GM12878 (cell line): ENCODE measurements at regions of chr17 and their contacts with region 1.

Region 1: GRCh38 chr17:2929881-2930533 is 133.4 kb downstream of the OR1D5 start:
- DNase-seq: no peak
- ATAC-seq: peak; percentile 76
- H3K4me3 ChIP-seq: no peak overlapping the region
- H3K27ac ChIP-seq: no peak overlapping the region
- H3K4me1 ChIP-seq: no peaks in the 10 kb centered on the region
- H3K27me3 ChIP-seq: no peaks in the 10 kb centered on the region
- CTCF ChIP-seq: peak; percentile 43 to 71 (median 49)
- EP300 ChIP-seq: no peak
- POLR2A ChIP-seq: no peak
- RAD21 ChIP-seq: peak; percentile 44

Region 2: DNA sequence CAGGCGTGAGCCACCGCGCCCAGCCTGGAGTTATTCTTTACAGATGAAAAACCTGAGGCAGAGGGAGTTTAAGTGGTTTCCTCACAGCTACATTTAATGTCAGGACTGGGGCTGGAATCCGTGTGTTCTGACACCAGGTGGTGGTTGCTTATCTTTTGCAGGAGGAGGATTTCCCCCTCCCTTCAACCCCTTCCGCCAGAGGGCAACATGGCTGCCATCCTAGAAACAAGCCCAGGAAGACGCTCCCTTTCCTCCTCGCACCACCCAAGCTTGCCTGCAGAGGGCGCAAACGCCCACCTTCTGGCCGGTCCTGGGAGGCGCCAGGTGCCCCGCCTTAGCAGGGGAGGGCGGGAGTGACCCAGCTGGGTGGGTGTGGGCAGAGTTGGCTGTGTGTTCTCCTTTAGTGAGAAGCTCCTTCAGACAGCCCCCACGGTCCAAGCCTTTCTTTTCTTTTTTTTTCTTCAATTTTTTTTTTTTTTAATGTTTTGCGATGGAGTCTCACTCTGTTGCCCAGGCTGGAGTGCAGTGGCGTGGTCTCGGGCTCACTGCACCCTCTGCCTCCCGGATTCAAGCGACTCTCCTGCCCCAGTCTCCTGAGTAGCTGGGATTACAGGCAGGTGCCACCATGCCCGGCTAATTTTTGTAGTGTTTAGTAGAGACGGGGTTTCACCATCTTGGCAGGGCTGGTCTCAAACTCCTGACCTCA is 143.7 kb before region 1 on chr17:
- CTCF ChIA-PET with region 1: interaction called, 3 read pairs
- POLR2A ChIA-PET with region 1: no interaction called
- RAD21 ChIA-PET with region 1: no interaction called
- SMC1A ChIA-PET with region 1: no interaction called
- in situ Hi-C with region 1: no loop called
- intact Hi-C with region 1: loop called (anchors 2 kb)
- DNase-seq: peak; percentile 61
- ATAC-seq: peak; percentile 99
- H3K4me3 ChIP-seq: no peak overlapping the region
- H3K27ac ChIP-seq: no peak overlapping the region
- H3K4me1 ChIP-seq: peaks cover 2% of the 10 kb centered on the region
- H3K27me3 ChIP-seq: no peaks in the 10 kb centered on the region; a peak in 1 of 4 replicates
- CTCF ChIP-seq: peak; percentile 76 to 87 (median 86)
- EP300 ChIP-seq: no peak
- POLR2A ChIP-seq: no peak
- RAD21 ChIP-seq: peak; percentile 74

Region 3: DNA sequence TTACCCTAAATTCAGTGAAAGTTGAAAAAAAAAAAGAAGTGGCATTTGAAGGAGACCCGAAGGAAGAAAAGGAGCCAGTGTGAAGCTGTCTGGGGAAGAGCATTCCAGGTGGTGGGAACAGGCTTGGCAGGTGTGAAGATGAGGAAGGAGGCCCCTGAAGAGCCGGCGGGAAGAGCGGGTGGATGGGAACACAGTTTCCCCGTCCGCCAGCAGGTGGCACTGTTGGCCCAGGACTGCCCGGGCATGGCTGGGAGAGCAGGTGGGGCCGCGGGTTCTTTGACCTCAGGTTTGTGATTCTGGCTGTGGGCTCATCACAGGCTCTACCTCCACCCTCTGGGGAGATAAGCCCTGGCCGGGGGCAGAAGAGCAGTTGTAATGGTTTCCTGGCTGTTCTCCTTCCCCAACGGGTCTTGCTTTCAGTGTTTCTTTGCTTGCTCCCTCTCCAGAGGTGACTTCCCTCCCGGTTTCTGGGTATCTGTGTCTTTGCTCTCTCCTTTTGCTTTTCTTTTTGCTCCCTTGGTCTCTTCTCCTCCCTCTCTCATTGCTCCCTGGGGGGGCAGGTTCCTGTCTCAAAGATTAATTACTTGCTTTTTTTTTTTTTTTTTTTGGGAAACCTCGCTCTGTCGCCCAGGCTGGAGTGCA is 101.5 kb before region 1 on chr17:
- CTCF ChIA-PET with region 1: interaction called, 4 read pairs
- POLR2A ChIA-PET with region 1: no interaction called
- RAD21 ChIA-PET with region 1: no interaction called
- SMC1A ChIA-PET with region 1: interaction called, 3 read pairs
- in situ Hi-C with region 1: no loop called
- intact Hi-C with region 1: loop called (anchors 1 kb)
- DNase-seq: no peak
- ATAC-seq: peak; percentile 96
- H3K4me3 ChIP-seq: no peak overlapping the region
- H3K27ac ChIP-seq: no peak overlapping the region
- H3K4me1 ChIP-seq: peaks cover 2% of the 10 kb centered on the region; the same call in 1 of the 2 replicates
- H3K27me3 ChIP-seq: no peaks in the 10 kb centered on the region; a peak in 1 of 4 replicates
- CTCF ChIP-seq: peak; percentile 87 to 94 (median 90)
- EP300 ChIP-seq: no peak
- POLR2A ChIP-seq: no peak
- RAD21 ChIP-seq: peak; percentile 82

Region 4: DNA sequence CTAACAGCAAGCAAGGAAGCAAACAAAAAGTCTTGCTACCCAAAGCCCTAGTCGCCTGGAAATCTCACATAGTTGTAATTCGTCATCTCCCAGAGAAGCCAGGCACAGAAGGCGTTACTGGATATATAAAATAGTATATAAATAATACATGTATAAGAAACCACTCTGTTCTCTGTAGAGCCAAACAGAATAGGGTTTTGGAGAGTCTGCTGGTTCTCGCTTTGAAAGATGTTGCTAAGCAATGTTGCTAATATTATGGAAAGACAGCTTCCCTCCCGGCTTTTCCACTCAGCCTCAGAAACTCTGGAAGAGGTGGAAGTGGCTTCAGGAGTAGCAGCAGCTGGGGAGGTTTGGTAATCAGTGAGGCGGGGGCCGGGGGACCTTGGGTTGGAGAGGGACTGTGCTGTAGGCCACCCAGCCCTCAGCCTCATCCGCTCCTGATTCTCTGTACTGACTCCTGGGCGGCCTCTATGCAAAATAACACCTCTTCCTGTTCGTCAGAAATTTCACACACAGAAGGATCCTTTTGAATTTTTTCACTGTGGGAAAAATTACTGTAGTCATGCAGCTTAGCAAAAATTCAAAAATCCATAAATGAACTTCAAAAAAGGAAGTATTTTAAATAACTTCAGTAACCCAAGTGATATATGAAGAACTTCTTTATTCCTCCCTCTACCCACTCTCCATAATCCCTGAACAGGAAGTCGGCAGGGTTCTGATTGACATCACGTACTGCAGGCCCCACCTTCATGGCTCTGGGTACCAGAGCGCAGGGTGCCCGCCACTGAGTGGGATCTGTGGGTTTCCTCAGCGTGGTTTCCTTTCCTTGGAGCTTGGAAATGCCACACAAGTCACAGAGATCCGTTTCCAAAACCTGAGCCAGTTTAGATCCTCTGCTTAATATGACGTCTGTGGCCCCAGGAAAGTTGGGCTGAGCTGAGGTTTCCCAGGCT is 82.3 kb before region 1 on chr17:
- CTCF ChIA-PET with region 1: interaction called, 7 read pairs
- POLR2A ChIA-PET with region 1: no interaction called
- RAD21 ChIA-PET with region 1: no interaction called
- SMC1A ChIA-PET with region 1: no interaction called
- in situ Hi-C with region 1: no loop called
- intact Hi-C with region 1: loop called (anchors 2 kb)
- DNase-seq: no peak
- ATAC-seq: no peak
- H3K4me3 ChIP-seq: no peak overlapping the region
- H3K27ac ChIP-seq: no peak overlapping the region; the same call in 1 of the 2 replicates
- H3K4me1 ChIP-seq: peaks cover 7% of the 10 kb centered on the region
- H3K27me3 ChIP-seq: peaks cover 0 to 6% of the 10 kb centered on the region in 2 experiments; a peak in 3 of 4 replicates
- CTCF ChIP-seq: no peak
- EP300 ChIP-seq: no peak
- POLR2A ChIP-seq: no peak
- RAD21 ChIP-seq: no peak

Region 5: GRCh38 chr17:3012926-3013581 is 83.0 kb after region 1 on chr17:
- CTCF ChIA-PET with region 1: no interaction called
- POLR2A ChIA-PET with region 1: no interaction called
- RAD21 ChIA-PET with region 1: no interaction called
- SMC1A ChIA-PET with region 1: no interaction called
- in situ Hi-C with region 1: no loop called
- intact Hi-C with region 1: loop called (anchors 5 kb)
- DNase-seq: peak; percentile 16
- ATAC-seq: peak; percentile 98
- H3K4me3 ChIP-seq: no peak overlapping the region
- H3K27ac ChIP-seq: no peak overlapping the region
- H3K4me1 ChIP-seq: no peaks in the 10 kb centered on the region
- H3K27me3 ChIP-seq: no peaks in the 10 kb centered on the region; a peak in 1 of 4 replicates
- CTCF ChIP-seq: peak; percentile 90 to 91 (median 91)
- EP300 ChIP-seq: no peak
- POLR2A ChIP-seq: no peak
- RAD21 ChIP-seq: peak; percentile 93